ENCODE measurements at regions of chr19 and their contacts with region 1.

Region 1: DNA sequence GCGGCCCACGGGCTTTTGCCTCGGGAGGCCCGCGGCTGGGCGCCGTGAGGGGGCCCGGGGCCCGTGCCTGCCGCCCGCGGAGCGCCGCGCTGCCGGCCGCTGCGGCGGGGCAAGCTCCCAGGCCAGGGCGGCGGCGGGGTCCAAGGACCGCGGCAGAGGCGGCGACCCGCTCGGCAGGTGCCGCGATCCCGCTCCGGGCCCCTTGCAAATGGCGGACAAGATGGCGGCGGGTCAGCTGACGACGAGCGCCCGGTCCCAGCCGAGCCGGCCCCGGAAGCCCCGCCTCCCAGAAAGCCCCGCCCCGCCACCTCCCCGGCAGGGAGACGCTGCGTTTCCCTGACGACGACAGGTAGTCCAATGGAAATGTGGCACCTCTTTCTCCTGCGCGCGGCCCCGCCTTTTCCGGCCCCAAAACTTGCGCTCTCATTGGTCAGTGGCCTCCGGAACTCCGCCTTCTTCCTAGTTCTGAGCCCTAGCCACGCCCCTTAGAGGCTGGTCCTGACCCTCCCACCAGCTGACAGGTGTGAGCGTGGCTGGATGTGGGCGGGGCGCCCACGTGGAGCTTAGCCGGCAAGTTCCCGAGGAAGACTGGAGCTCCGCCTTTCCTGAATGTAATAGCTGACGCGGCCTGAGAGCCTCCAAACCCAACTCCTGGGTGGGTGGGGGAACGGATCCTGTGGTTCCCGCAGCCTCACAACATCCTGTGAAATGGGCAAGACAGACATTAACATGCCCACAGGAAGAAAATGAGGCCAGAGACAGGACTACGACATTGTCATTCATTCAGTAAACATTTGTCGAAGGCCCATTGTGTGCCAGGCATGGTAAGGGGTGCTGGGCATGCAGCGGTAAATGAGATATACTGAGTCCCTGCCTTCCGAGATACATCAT is at the start of gene AP3D1:
- DNase-seq: peak; percentile 100
- H3K4me3 ChIP-seq: peak within 1 kb of the TSS; percentile 91 to 100 (median 98)
- H3K27ac ChIP-seq: peak within 1 kb of the TSS; percentile 72
- H3K4me1 ChIP-seq: peaks cover 32% of the 10 kb centered on the region
- H3K27me3 ChIP-seq: no peaks in the 10 kb centered on the region
- CTCF ChIP-seq: no peak
- total RNA-seq, gene AP3D1: 124 to 143 TPM

Region 2: GRCh38 chr19:1417145-1417544 is 734.4 kb before region 1 on chr19:
- CTCF ChIA-PET with region 1: no interaction called
- dilution Hi-C with region 1: no loop called
- in situ Hi-C with region 1: no loop called
- intact Hi-C with region 1: no loop called
- DNase-seq: no peak
- H3K4me3 ChIP-seq: no peak overlapping the region
- H3K27ac ChIP-seq: peak overlapping the region; percentile 72
- H3K4me1 ChIP-seq: peaks cover 27% of the 10 kb centered on the region
- H3K27me3 ChIP-seq: no peaks in the 10 kb centered on the region
- CTCF ChIP-seq: no peak

Region 3: GRCh38 chr19:1905071-1905862 is 246.3 kb before region 1 on chr19 and contains the starts of genes ADAT3 and SCAMP4:
- CTCF ChIA-PET with region 1: no interaction called
- dilution Hi-C with region 1: no loop called
- in situ Hi-C with region 1: no loop called
- intact Hi-C with region 1: loop called (anchors 10 kb)
- DNase-seq: peak; percentile 99
- H3K4me3 ChIP-seq: peak within 1 kb of the TSS; percentile 57 to 80 (median 62)
- H3K27ac ChIP-seq: peak within 1 kb of the TSS; percentile 41
- H3K4me1 ChIP-seq: peaks cover 38% of the 10 kb centered on the region
- H3K27me3 ChIP-seq: no peaks in the 10 kb centered on the region
- CTCF ChIP-seq: no peak
- total RNA-seq, gene ADAT3: 3.5 to 7.3 TPM
- total RNA-seq, gene SCAMP4: 70.2 to 76.5 TPM

Region 4: DNA sequence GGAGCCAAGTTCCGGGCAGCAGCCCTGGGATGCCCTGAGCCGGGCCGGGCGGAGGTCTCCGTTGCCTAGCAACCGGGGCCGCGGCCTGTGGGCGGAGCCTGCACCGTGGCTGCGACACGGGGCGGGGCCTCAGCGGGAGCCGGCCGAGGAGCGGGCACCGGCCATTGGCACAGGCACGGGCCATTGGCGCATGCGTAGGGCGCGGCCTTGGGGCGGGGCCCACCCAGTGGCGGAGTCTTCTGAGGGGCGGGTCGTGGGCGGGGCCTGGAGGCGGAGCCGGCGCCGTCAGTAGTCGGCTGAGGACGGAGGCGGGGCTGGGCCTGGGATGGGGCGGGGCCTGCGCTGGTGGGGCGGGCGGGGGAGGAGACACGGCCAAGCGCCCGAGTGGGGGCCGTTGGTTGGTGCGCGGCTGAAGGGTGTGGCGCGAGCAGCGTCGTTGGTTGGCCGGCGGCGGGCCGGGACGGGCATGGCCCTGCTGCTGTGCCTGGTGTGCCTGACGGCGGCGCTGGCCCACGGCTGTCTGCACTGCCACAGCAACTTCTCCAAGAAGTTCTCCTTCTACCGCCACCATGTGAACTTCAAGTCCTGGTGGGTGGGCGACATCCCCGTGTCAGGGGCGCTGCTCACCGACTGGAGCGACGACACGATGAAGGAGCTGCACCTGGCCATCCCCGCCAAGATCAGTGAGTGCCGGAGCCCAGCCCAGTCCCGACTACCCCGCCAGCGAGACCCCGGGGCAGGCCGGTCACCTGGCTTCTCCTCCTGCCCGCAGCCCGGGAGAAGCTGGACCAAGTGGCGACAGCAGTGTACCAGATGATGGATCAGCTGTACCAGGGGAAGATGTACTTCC is 54.9 kb before region 1 on chr19 and contains the start of gene IZUMO4:
- CTCF ChIA-PET with region 1: no interaction called
- dilution Hi-C with region 1: no loop called
- in situ Hi-C with region 1: no loop called
- intact Hi-C with region 1: loop called (anchors 5 kb)
- DNase-seq: peak; percentile 95
- H3K4me3 ChIP-seq: peak within 1 kb of the TSS; percentile 85 to 96 (median 86)
- H3K27ac ChIP-seq: peak within 1 kb of the TSS; percentile 82
- H3K4me1 ChIP-seq: peaks cover 37% of the 10 kb centered on the region
- H3K27me3 ChIP-seq: no peaks in the 10 kb centered on the region
- CTCF ChIP-seq: peak; percentile 13 to 55
- total RNA-seq, gene IZUMO4: 1.2 to 11.2 TPM

Region 5: GRCh38 chr19:2213799-2214198 is 62.2 kb after region 1 on chr19:
- CTCF ChIA-PET with region 1: interaction called, 17 read pairs
- dilution Hi-C with region 1: no loop called
- in situ Hi-C with region 1: no loop called
- intact Hi-C with region 1: no loop called
- DNase-seq: no peak
- H3K4me3 ChIP-seq: no peak overlapping the region
- H3K27ac ChIP-seq: no peak overlapping the region
- H3K4me1 ChIP-seq: no peaks in the 10 kb centered on the region
- H3K27me3 ChIP-seq: no peaks in the 10 kb centered on the region
- CTCF ChIP-seq: no peak

Region 6: DNA sequence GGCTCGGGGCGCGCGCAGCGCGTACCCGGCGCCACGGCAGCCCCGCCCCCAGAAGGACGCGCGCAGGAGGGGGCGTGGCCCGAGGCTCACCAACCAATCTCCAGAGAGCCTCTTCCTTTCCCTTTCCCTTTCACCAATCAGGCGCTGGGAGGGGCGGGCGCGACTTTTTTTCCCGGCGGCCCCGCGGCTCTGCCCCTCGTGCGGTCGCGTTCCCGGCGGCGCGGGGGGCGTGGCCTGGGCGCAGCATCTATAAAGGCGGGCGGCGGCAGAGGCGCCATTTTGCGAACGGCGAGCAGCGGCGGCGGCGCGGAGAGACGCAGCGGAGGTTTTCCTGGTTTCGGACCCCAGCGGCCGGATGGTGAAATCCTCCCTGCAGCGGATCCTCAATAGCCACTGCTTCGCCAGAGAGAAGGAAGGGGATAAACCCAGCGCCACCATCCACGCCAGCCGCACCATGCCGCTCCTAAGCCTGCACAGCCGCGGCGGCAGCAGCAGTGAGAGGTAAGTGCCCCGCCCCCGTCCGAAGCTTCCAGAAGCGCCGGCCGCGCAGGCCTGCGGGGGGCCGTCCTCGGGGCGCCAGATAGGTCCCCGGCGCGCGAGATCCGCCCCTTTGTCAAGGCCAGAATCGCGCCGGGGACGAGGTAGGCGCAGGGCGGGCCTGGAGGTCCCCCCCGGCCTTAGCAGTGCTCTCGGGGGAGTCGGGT is 117.8 kb after region 1 on chr19:
- CTCF ChIA-PET with region 1: interaction called, 3 read pairs
- dilution Hi-C with region 1: no loop called
- in situ Hi-C with region 1: no loop called
- intact Hi-C with region 1: loop called (anchors 1 kb)
- DNase-seq: peak; percentile 94
- H3K4me3 ChIP-seq: peak overlapping the region; percentile 95 to 100 (median 99)
- H3K27ac ChIP-seq: peak overlapping the region; percentile 74
- H3K4me1 ChIP-seq: peaks cover 35% of the 10 kb centered on the region
- H3K27me3 ChIP-seq: no peaks in the 10 kb centered on the region
- CTCF ChIP-seq: no peak

Measured in mammary epithelial cell (primary cell).